ENCODE measurements at regions of chr2 and their contacts with region 1.

Region 1: DNA sequence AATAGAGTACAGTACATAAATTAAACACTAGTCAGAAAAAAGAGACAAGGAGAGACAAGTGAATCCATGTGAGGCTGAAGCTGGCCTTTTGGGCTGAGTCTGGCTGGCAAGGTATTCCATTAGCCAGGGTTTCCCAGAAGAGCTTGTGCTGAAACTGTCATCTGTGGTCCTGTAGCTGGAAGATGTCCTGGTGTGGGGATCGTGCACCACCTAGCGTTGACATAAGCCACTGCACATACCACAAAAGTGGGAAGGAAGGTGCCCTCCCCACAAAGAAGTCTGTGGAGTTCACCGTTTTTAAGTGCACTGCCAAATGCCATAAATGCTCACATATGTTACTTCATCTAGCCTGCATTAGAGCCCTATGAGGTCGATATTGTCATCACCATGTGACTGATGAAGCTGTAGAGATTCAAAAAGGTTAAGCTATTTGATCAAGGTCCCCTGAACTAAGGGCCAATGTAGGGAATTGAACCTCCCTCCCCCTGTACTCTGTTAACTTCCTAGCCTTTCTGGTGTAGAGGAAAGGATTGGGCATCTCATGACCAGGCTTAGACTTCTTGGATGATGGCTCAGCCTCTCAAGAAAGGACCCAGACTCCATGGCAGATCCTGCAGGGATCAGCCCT is 31.9 kb upstream of the GALNT14 start:
- DNase-seq: peak; percentile 4
- H3K4me3 ChIP-seq: no peak overlapping the region
- H3K27me3 ChIP-seq: 0 out of 2 replicates have a peak, but pooled peaks cover 2% of the 10 kb centered on the region
- CTCF ChIP-seq: peak; percentile 93

Region 2: GRCh38 chr2:30862054-30862651 is 308.0 kb before region 1 on chr2:
- CTCF ChIA-PET with region 1: interaction called, 16 read pairs
- POLR2A ChIA-PET with region 1: no interaction called
- DNase-seq: peak; percentile 6
- H3K4me3 ChIP-seq: no peak overlapping the region
- H3K27me3 ChIP-seq: no peaks in the 10 kb centered on the region
- CTCF ChIP-seq: peak; percentile 78

Region 3: DNA sequence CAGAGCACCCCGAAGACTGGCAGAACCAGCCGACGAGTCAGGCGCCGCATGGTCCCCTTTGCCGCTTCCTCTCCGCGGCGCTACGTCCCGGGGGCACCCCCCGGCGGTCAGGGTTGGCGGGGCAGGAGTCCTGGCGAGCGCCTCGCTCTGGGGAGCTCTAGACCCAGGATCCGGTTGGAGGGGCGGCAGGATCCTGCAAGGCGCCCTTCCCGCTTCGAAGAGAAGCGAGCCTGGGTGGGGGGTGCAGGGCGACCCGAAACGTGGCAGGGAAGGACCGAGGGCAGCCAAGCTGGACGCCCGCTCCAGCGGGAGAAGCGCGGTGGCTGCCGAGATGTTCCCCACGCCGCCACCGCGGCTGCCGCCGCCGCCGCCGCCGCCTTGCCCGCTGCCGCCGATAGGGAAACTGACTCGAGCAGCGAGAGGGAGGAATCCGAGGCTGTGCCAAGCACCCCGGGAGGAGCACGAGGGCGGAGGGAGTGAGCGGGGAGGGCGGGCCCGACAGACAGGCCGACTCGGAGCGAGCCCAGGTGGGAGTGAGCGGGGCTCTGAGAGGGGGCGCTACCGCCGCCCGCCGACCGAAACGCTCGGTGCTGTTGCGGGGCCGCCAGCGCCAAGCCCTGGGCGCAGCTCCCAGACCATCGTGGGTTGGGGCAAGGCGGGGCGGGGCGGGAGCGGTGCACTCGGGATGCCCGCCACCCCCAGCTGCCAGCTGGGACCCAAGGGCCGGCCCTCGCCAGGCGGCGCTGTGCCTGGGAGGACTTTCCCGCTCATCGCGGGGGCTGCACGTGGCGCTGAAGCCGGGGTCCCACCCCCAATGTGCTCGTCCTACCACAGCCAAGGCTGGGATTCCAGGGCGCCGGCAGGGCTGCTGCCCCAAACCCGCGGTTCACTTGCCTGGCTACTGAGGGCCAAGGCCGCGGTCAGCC is 31.9 kb before region 1 on chr2 and contains the start of gene GALNT14:
- CTCF ChIA-PET with region 1: interaction called, 11 read pairs
- POLR2A ChIA-PET with region 1: no interaction called
- DNase-seq: no peak
- H3K4me3 ChIP-seq: peak within 1 kb of the TSS; percentile 51
- H3K27me3 ChIP-seq: peaks cover 8% of the 10 kb centered on the region
- CTCF ChIP-seq: peak; percentile 73
- polyA plus RNA-seq, gene GALNT14: 1.9 and 3.5 TPM in 2 replicates

Region 4: GRCh38 chr2:31151501-31151900 is 18.7 kb before region 1 on chr2:
- CTCF ChIA-PET with region 1: interaction called, 25 read pairs
- POLR2A ChIA-PET with region 1: no interaction called
- DNase-seq: no peak
- H3K4me3 ChIP-seq: no peak overlapping the region
- H3K27me3 ChIP-seq: no peaks in the 10 kb centered on the region
- CTCF ChIP-seq: no peak